AG04449 (cell line): ENCODE measurements at regions of chr13 and their contacts with region 1.

Region 1: GRCh38 chr13:30978981-30979956 is 46.8 kb downstream of the TEX26 start:
- DNase-seq: no peak
- H3K4me3 ChIP-seq: no peak overlapping the region
- CTCF ChIP-seq: peak; percentile 53

Region 2: DNA sequence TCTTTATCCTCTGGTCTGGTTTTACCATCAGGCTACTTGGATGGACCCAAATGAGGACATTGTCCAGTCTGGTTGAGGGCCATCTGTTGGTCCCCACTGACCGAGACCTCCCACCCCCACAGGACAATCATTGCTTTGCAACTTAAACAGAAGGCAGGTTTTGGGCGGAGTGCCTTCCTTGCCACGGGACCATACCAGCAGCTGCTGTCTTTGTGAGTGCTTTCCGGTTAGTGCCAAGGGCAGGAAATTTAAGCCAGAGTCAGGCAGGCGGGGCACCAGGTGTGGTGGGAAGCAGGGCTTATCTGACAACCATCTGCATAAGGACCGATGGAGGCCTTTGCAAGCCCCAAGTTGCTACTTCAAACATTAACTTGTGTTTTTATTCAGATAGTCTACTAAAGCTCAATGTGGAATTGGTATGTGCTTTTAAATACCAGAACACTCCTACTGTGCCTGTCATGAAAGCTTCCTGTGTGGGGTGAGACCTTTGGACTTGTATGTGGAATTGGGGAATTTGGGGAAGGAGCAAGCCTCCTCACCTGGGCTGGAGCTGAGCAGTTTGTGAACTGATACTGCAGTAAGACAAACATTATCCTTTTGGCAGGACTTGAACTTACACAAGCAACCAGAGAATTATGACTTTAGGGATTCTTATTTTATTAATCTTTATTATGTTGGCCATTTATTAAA is 596.3 kb before region 1 on chr13:
- CTCF ChIA-PET with region 1: no interaction called
- POLR2A ChIA-PET with region 1: no interaction called
- DNase-seq: no peak
- H3K4me3 ChIP-seq: no peak overlapping the region
- CTCF ChIP-seq: no peak

Region 3: DNA sequence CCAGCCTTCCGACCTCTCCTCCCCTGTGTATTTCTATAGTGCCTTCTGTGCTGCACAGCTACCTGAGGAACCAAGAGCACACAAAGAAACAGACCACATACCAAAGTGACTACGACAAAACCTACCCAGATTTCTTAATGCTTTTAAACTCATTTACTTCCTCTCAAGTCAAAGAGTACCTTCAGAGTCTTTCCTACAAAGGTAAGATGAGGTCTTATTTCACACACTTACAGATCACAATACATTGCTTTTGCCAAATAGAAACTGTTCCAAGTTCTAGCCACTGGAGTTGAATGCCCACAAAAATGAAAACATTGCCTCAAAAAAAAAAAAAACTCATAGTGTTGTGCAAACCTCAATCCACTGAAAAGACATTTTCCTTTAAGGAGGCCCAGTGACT is 10.4 kb before region 1 on chr13:
- CTCF ChIA-PET with region 1: interaction called, 30 read pairs
- POLR2A ChIA-PET with region 1: interaction called, 4 read pairs
- DNase-seq: no peak
- H3K4me3 ChIP-seq: no peak overlapping the region
- CTCF ChIP-seq: no peak

Region 4: DNA sequence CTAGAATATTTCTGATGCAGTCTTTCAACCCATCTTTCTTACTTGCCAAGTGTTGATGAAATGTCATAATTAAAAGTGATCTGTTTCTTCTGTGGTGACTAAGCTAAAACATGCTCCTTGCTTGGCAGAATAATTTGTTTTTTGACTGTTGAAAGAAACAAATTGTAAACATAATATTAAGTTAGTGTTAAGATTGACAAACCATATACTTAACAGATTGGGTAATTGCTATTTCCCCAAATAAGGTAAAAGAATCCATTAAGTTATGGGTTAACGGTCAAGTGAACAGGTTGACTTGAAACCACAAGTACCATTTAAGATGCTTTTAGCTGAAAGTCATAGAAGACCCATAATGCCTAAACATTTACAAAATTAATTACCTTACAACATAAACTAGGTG is 16.1 kb after region 1 on chr13:
- CTCF ChIA-PET with region 1: interaction called, 15 read pairs
- POLR2A ChIA-PET with region 1: no interaction called
- DNase-seq: no peak
- H3K4me3 ChIP-seq: no peak overlapping the region
- CTCF ChIP-seq: no peak

Region 5: DNA sequence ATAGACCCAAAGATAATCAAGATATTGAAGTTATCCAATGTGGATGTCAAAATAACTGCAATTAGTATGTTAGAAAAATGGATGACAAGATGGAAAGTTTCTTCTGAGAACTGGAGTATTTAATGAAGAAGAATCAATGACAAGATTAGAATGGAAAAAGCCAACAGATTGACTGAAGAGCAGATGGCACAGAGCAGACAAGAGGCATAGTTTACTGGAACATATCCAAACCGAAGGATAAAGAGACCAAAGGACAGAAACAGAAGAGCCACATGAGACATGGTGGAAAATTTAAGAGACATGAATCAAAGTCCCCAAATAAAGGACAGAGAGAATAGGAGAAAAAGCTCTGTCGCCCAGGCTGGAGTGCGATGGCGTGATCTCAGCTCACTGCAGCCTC is 670.5 kb after region 1 on chr13:
- CTCF ChIA-PET with region 1: no interaction called
- POLR2A ChIA-PET with region 1: no interaction called
- DNase-seq: no peak
- H3K4me3 ChIP-seq: no peak overlapping the region
- CTCF ChIP-seq: no peak